ENCODE measurements at regions of chr16 and their contacts with region 1.

Region 1: DNA sequence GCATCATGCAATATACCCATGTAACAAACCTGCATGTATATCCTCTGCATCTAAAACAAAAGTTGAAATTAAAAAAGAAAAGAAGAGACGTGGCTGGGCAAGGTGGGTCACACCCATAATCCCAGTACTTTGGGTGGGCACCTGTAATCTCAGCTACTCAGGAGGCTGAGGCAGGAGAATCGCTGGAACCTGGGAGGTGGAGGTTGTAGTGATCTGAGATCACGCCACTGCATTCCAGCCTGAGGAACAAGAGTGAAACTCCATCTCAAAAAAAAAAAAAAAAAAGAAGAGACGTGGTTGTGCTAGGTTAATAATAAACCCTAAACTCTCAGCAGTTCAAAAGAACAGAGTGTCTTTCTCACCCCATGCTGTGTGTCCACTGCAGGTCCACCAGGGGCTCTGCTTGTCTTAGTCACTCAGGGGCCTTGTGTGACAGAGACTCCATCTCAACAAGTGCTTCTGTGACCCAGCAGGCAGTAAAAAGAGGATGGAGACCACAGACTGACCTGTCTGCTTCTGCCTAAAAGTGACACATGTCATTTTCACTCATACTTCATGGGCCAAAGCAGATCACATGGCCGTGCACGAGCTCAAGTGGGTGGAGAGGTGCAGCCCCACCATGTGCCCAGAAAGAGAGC is 22.3 kb upstream of the N4BP1 start:
- DNase-seq: no peak
- ATAC-seq: no peak
- H3K4me3 ChIP-seq: no peak overlapping the region
- H3K4me3 Mint-ChIP-seq: no peak overlapping the region
- H3K27ac ChIP-seq: no peak overlapping the region
- H3K27ac Mint-ChIP-seq: no peak overlapping the region
- H3K4me1 ChIP-seq: peaks cover 9% of the 10 kb centered on the region
- H3K4me1 Mint-ChIP-seq: peaks cover 8% of the 10 kb centered on the region
- H3K27me3 ChIP-seq: no peaks in the 10 kb centered on the region
- H3K27me3 Mint-ChIP-seq: peaks cover 3% of the 10 kb centered on the region
- CTCF ChIP-seq: no peak

Region 2: GRCh38 chr16:48156790-48157209 is 475.5 kb before region 1 on chr16:
- CTCF ChIA-PET with region 1: no interaction called
- POLR2A ChIA-PET with region 1: no interaction called
- intact Hi-C with region 1: loop called in 1 of 2 experiments (anchors 5 kb)
- DNase-seq: peak; percentile 62 to 86 (median 76)
- ATAC-seq: peak; percentile 74
- H3K4me3 ChIP-seq: no peak overlapping the region
- H3K4me3 Mint-ChIP-seq: no peak overlapping the region
- H3K27ac ChIP-seq: no peak overlapping the region
- H3K27ac Mint-ChIP-seq: no peak overlapping the region
- H3K4me1 ChIP-seq: peaks cover 7% of the 10 kb centered on the region
- H3K4me1 Mint-ChIP-seq: no peaks in the 10 kb centered on the region
- H3K27me3 ChIP-seq: peaks cover 0 to 3% of the 10 kb centered on the region in 2 experiments
- H3K27me3 Mint-ChIP-seq: peaks cover 14% of the 10 kb centered on the region
- CTCF ChIP-seq: peak; percentile 94

Region 3: GRCh38 chr16:48231727-48232492 is 400.3 kb before region 1 on chr16:
- CTCF ChIA-PET with region 1: no interaction called
- POLR2A ChIA-PET with region 1: no interaction called
- intact Hi-C with region 1: loop called (anchors 1 to 5 kb)
- DNase-seq: peak in 7 of 14 experiments; percentile 2 to 50 (median 16)
- ATAC-seq: peak; percentile 52
- H3K4me3 ChIP-seq: no peak overlapping the region
- H3K4me3 Mint-ChIP-seq: no peak overlapping the region
- H3K27ac ChIP-seq: no peak overlapping the region
- H3K27ac Mint-ChIP-seq: no peak overlapping the region
- H3K4me1 ChIP-seq: no peaks in the 10 kb centered on the region
- H3K4me1 Mint-ChIP-seq: no peaks in the 10 kb centered on the region
- H3K27me3 ChIP-seq: no peaks in the 10 kb centered on the region
- H3K27me3 Mint-ChIP-seq: peaks cover 17% of the 10 kb centered on the region
- CTCF ChIP-seq: no peak

Region 4: GRCh38 chr16:48276102-48276501 is 356.2 kb before region 1 on chr16:
- CTCF ChIA-PET with region 1: no interaction called
- POLR2A ChIA-PET with region 1: no interaction called
- intact Hi-C with region 1: loop called in 1 of 2 experiments (anchors 5 kb)
- DNase-seq: no peak
- ATAC-seq: no peak
- H3K4me3 ChIP-seq: no peak overlapping the region
- H3K4me3 Mint-ChIP-seq: no peak overlapping the region
- H3K27ac ChIP-seq: no peak overlapping the region
- H3K27ac Mint-ChIP-seq: no peak overlapping the region
- H3K4me1 ChIP-seq: no peaks in the 10 kb centered on the region
- H3K4me1 Mint-ChIP-seq: peaks cover 27% of the 10 kb centered on the region
- H3K27me3 ChIP-seq: no peaks in the 10 kb centered on the region
- H3K27me3 Mint-ChIP-seq: no peaks in the 10 kb centered on the region
- CTCF ChIP-seq: no peak

Region 5: DNA sequence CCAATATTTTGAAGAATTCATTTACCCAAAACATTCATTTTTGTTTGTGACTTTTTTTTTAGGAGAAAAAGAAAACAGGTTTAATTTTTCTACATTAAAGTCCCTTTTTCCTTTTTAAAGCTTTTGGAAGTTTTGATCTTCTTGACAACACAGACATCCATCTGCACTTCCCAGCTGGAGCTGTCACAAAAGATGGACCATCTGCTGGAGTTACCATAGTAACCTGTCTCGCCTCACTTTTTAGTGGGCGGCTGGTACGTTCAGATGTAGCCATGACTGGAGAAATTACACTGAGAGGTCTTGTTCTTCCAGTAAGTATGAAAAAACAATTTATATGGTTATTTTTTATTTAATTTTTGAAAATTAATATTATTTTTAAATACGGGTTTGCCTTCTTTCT is 284.3 kb before region 1 on chr16:
- CTCF ChIA-PET with region 1: interaction called, 20 read pairs
- POLR2A ChIA-PET with region 1: no interaction called
- intact Hi-C with region 1: loop called in 1 of 2 experiments (anchors 1 kb)
- DNase-seq: no peak
- ATAC-seq: no peak
- H3K4me3 ChIP-seq: no peak overlapping the region
- H3K4me3 Mint-ChIP-seq: no peak overlapping the region
- H3K27ac ChIP-seq: no peak overlapping the region
- H3K27ac Mint-ChIP-seq: peak overlapping the region; percentile 80
- H3K4me1 ChIP-seq: peaks cover 3% of the 10 kb centered on the region
- H3K4me1 Mint-ChIP-seq: peaks cover 20% of the 10 kb centered on the region
- H3K27me3 ChIP-seq: no peaks in the 10 kb centered on the region
- H3K27me3 Mint-ChIP-seq: no peaks in the 10 kb centered on the region
- CTCF ChIP-seq: no peak

Region 6: DNA sequence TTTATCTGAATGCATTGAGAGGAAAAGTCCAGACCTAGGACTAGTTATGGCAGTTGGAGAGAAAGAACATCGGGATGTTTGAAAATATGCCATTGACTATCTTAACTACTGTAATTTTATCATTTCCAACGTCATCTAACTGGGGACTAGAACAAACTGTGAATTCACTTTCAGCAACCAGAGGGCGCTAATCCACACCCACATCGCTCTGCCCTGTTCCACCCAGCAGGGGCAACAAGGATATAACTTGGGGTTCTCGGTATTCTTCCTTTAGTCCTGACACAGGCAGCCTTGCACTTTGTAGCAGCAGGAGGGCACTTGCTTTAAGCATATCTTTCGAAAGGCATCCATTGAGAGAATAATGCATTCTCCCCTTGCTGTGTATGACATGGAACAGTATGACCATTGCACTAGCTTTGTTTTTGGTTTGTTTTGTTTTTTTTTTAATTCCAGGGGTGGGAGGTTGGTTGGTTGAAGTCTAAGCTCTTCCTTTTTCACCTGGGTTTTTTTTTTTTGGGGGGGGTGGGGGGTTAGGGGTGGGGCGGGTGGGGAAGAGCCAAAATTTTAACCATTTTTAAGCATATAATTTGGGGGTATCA is 278.6 kb before region 1 on chr16:
- CTCF ChIA-PET with region 1: interaction called, 20 read pairs
- POLR2A ChIA-PET with region 1: interaction called, 12 read pairs
- intact Hi-C with region 1: loop called (anchors 1 to 2 kb)
- DNase-seq: peak; percentile 47 to 90 (median 59)
- ATAC-seq: peak; percentile 98
- H3K4me3 ChIP-seq: no peak overlapping the region
- H3K4me3 Mint-ChIP-seq: no peak overlapping the region
- H3K27ac ChIP-seq: no peak overlapping the region
- H3K27ac Mint-ChIP-seq: peak overlapping the region; percentile 67
- H3K4me1 ChIP-seq: peaks cover 2% of the 10 kb centered on the region
- H3K4me1 Mint-ChIP-seq: peaks cover 12% of the 10 kb centered on the region
- H3K27me3 ChIP-seq: no peaks in the 10 kb centered on the region
- H3K27me3 Mint-ChIP-seq: no peaks in the 10 kb centered on the region
- CTCF ChIP-seq: peak; percentile 85

Region 7: GRCh38 chr16:48365581-48366164 is 266.6 kb before region 1 on chr16:
- CTCF ChIA-PET with region 1: interaction called, 10 read pairs
- POLR2A ChIA-PET with region 1: interaction called, 10 read pairs
- intact Hi-C with region 1: no loop called
- DNase-seq: peak; percentile 49 to 86 (median 68)
- ATAC-seq: peak; percentile 82
- H3K4me3 ChIP-seq: peak overlapping the region; percentile 67
- H3K4me3 Mint-ChIP-seq: peak overlapping the region; percentile 100
- H3K27ac ChIP-seq: peak overlapping the region; percentile 81
- H3K27ac Mint-ChIP-seq: peak overlapping the region; percentile 98
- H3K4me1 ChIP-seq: peaks cover 17% of the 10 kb centered on the region
- H3K4me1 Mint-ChIP-seq: peaks cover 55% of the 10 kb centered on the region
- H3K27me3 ChIP-seq: no peaks in the 10 kb centered on the region
- H3K27me3 Mint-ChIP-seq: no peaks in the 10 kb centered on the region
- CTCF ChIP-seq: no peak